ENCODE measurements at regions of chr3 and their contacts with region 1.

Region 1: DNA sequence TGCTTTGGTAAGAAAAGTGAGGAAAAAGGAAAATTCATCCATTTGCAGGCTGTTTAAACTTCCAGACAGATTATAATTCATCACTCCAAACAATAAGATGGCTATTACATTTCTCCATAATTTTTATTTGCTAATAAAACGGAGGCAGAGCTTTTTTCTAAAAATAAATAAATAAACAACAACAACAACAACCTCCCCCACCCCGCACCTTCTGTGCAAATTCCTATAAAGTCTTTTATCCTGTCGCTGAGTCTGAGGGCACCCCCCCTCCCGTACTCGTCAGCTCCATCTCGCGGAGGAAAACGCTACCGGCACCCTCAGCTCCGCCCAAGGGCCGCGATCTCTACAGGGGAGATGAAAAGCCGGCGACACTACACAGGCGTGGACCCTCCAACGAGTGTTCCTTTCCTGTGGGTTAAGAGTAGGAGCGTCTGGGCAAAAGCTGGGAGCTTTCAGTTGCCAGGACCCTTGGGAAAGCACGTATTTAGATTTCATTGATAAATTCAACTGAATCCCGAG is 1.0 kb upstream of the ATP1B3 start:
- DNase-seq: peak; percentile 49
- H3K4me3 ChIP-seq: peak overlapping the region; percentile 67
- CTCF ChIP-seq: peak; percentile 93

Region 2: DNA sequence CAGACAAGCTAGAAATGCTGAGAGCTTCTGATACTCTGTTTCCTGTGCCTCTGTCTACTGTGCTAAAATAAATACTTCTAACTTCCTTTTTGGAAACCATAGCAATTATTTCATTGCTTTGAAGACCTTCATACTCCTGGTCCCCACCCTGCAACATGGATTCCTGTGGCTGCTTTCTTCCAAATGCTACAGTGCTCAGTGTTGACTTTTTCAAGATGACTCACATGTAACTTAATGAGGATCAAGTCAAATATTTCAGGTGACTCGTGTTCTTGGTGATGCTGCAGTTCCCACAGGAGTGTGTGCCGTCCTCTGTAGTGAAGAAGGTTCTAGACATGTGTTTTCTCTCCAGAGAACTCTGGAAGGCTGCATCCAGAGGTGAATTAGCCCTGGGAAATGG is 1651.8 kb before region 1 on chr3:
- in situ Hi-C with region 1: no loop called
- DNase-seq: peak; percentile 41
- H3K4me3 ChIP-seq: no peak overlapping the region
- CTCF ChIP-seq: no peak

Region 3: GRCh38 chr3:141575879-141576743 is 299.3 kb before region 1 on chr3:
- in situ Hi-C with region 1: loop called (anchors 25 kb)
- DNase-seq: peak; percentile 13
- H3K4me3 ChIP-seq: no peak overlapping the region
- CTCF ChIP-seq: peak; percentile 30

Measured in astrocyte of the cerebellum (primary cell).